ENCODE measurements at regions of chr4 and their contacts with region 1.

Region 1: GRCh38 chr4:118772081-118772766 is 63.7 kb downstream of the SEC24D start:
- DNase-seq: peak in 1 of 2 donors; percentile 78
- H3K4me3 ChIP-seq: peak overlapping the region in 2 of 4 donors; percentile 7 to 15
- H3K27ac ChIP-seq: peak overlapping the region; percentile 3 to 83 (median 72)
- H3K4me1 ChIP-seq: peaks cover 0 to 81% (median 41%) of the 10 kb centered on the region in 4 donors
- H3K27me3 ChIP-seq: no peaks in the 10 kb centered on the region
- CTCF ChIP-seq: peak in 4 of 7 experiments; percentile 46 to 59 (median 51)
- EP300 ChIP-seq: no peak
- POLR2A ChIP-seq: no peak

Region 2: GRCh38 chr4:118865091-118865708 is 93.0 kb after region 1 on chr4:
- intact Hi-C with region 1: loop called (anchors 10 kb)
- DNase-seq: peak; percentile 52 to 74
- H3K4me3 ChIP-seq: no peak overlapping the region
- H3K27ac ChIP-seq: no peak overlapping the region
- H3K4me1 ChIP-seq: peaks cover 0 to 11% (median 0%) of the 10 kb centered on the region in 4 donors
- H3K27me3 ChIP-seq: no peaks in the 10 kb centered on the region
- CTCF ChIP-seq: peak in 5 of 7 experiments; percentile 40 to 58 (median 51)
- EP300 ChIP-seq: no peak
- POLR2A ChIP-seq: no peak